K562 (cell line): ENCODE measurements at regions of chr6 and their contacts with region 1.

Region 1: DNA sequence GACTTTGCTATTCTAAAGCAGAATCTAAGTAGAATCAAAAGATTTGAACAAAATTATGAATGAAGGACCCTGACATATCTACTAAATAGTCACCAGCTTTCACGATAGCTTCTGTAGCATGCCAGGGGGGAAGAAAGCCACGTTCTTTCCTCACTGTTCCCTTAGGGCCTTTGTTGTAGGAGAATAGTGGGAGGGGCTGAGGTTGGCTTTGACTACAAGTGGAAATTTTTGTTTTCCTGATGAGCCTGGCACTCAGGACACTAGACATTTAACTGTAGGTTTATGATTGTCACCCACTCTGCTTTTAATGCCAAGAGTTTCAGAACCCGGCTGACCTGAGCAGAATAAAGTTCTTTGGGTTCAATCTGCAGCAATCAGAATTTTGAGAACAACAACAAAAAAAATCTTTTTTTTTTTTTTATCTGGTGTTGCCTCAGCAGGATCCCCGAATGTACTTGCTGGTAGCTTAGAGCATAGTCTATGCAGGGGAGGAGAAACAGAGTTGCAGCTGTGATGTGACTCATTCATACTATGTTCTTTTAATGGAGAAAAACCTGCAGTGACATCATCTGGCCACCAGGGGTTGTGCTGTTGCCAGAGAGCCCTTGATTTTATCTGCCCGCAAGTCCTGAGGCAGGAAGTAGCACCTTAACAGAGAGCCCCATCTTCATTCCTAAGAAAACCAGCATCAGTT is 38.5 kb downstream of the TPD52L1 start:
- DNase-seq: peak; percentile 72 to 88 (median 75)
- ATAC-seq: peak; percentile 90
- H3K4me3 ChIP-seq: no peak overlapping the region
- H3K27ac ChIP-seq: no peak overlapping the region
- H3K4me1 ChIP-seq: peaks cover 5 to 46% of the 10 kb centered on the region in 2 experiments; a peak in 4 of 5 replicates
- H3K27me3 ChIP-seq: no peaks in the 10 kb centered on the region
- CTCF ChIP-seq: peak; percentile 78 to 92 (median 86)
- EP300 ChIP-seq: peak; percentile 60
- POLR2A ChIP-seq: no peak
- RAD21 ChIP-seq: peak; percentile 61 to 72

Region 2: DNA sequence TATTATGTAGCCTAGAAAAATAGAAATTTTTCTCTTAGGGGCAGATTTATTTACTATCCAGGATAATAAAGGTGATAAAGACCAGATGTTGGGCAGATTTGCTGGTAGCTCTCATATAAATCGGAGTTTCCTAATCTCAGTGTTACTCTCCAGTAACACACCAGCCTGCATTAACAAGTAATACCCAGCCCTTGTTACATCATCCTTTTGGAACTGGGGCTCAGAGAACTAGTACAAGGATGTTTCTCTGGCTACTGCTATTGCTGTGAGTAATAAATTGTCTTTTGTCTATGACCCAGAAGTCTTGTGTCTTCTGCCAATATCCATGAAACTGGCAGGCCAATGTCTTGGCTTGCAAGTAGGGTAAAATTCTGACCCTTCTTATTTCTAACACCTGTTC is 21.7 kb before region 1 on chr6:
- CTCF ChIA-PET with region 1: no interaction called
- POLR2A ChIA-PET with region 1: interaction called, 10 read pairs
- in situ Hi-C with region 1: no loop called
- intact Hi-C with region 1: no loop called
- DNase-seq: no peak
- ATAC-seq: peak; percentile 64
- H3K4me3 ChIP-seq: no peak overlapping the region
- H3K27ac ChIP-seq: no peak overlapping the region
- H3K4me1 ChIP-seq: peaks cover 0 to 41% of the 10 kb centered on the region in 2 experiments; a peak in 3 of 5 replicates
- H3K27me3 ChIP-seq: no peaks in the 10 kb centered on the region
- CTCF ChIP-seq: no peak
- EP300 ChIP-seq: no peak
- POLR2A ChIP-seq: no peak
- RAD21 ChIP-seq: no peak

Region 3: DNA sequence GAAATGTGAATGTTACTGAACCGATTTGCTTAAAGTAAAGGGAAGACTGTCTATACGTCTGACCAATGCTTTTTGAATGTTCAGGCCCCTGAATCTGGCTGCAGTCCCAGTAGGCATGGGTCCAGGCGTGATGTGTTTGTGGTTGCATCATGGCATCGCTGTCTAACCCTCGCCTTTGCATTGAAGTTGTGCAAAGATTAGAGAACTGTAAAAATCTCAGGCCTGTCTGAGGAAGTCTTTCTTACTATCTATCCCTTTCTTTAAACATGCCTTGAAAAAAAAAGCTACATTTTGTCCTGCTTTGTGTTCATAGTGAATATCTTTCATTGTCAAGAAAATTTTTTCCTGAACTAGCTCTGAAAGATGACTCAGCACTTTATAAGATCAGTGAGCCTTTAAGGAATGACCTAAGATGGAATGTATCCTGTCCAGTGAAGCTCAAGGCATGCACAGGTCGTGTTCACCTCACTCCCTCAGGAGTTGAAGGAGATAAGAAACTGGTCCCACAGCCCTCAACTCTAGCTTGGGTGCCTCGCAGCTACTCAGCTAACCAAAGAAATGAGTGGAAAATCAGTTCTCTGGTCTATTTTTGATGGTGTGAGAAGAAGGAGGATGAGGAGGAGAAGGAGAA is 10.0 kb after region 1 on chr6:
- CTCF ChIA-PET with region 1: no interaction called
- POLR2A ChIA-PET with region 1: interaction called, 11 read pairs
- in situ Hi-C with region 1: no loop called
- intact Hi-C with region 1: no loop called
- DNase-seq: peak; percentile 27 to 69 (median 44)
- ATAC-seq: peak; percentile 81
- H3K4me3 ChIP-seq: no peak overlapping the region
- H3K27ac ChIP-seq: peak overlapping the region; percentile 66; the same call in 2 of the 3 replicates
- H3K4me1 ChIP-seq: peaks cover 16 to 43% of the 10 kb centered on the region in 2 experiments
- H3K27me3 ChIP-seq: no peaks in the 10 kb centered on the region
- CTCF ChIP-seq: no peak
- EP300 ChIP-seq: no peak
- POLR2A ChIP-seq: no peak
- RAD21 ChIP-seq: no peak

Region 4: GRCh38 chr6:125307150-125307838 is 115.2 kb after region 1 on chr6:
- CTCF ChIA-PET with region 1: no interaction called
- POLR2A ChIA-PET with region 1: no interaction called
- in situ Hi-C with region 1: no loop called
- intact Hi-C with region 1: loop called (anchors 2 kb)
- DNase-seq: peak; percentile 73 to 91 (median 82)
- ATAC-seq: peak; percentile 80
- H3K4me3 ChIP-seq: 0 out of 2 replicates have a peak overlapping the region, but pooled peaks have one; percentile 3
- H3K27ac ChIP-seq: peak overlapping the region; percentile 84
- H3K4me1 ChIP-seq: peaks cover 8 to 45% of the 10 kb centered on the region in 2 experiments; a peak in 4 of 5 replicates
- H3K27me3 ChIP-seq: no peaks in the 10 kb centered on the region
- CTCF ChIP-seq: no peak
- EP300 ChIP-seq: peak; percentile 98
- POLR2A ChIP-seq: no peak
- RAD21 ChIP-seq: peak in 1 of 2 experiments; percentile 24; a peak in 1 of 4 replicates